ENCODE measurements at regions of chr5 and their contacts with region 1.

Region 1: DNA sequence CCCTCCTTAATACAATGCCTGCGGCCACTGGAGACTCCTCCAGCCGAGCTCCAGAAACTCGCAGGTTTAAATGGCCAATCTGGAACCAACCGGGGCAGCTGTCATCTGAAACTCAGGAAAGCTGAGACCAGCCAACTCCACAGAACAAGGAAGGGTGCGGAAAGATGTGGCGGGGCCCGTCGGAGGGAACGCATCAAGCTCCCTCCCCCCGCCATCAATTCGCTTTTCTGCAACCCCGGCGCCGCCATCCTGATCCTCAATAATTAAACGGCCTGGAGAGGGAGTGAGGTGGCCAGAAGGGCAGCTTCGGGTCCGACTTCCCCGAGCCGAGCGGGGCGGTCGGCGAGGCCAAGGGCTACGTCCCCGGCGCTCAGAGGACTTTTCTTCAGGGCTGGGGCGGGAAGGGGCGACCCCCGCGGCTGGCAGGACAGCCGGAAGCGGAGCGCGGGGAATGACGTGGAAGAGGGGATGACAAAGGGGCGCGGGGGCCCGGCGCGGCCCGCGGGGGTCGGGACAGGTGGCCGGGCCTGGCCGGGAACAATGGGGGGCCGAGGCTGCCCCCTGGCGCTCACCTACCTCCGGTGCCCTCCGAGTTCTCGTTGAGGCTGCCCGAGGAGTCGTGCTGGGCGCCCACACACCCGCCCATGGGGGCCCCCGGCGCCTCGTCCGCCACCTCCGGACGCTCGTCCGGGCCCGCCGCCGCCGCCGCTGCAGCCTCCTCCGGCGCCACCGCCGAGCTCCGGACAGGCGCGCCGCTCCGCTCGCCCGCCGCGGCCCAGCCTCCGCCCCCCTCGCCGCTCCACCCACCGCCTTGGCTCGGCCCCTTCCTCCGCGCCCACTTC is at the start of gene UBTD2:
- DNase-seq: peak in 1 of 2 donors; percentile 91
- H3K4me3 ChIP-seq: peak within 1 kb of the TSS; percentile 86 to 98
- H3K27ac ChIP-seq: peak within 1 kb of the TSS; percentile 88 to 97
- H3K4me1 ChIP-seq: peaks cover 6 to 23% of the 10 kb centered on the region in 2 donors
- H3K27me3 ChIP-seq: no peaks in the 10 kb centered on the region
- CTCF ChIP-seq: peak in 2 of 3 experiments; percentile 26 to 61
- total RNA-seq, gene UBTD2: 6.8 TPM

Region 2: DNA sequence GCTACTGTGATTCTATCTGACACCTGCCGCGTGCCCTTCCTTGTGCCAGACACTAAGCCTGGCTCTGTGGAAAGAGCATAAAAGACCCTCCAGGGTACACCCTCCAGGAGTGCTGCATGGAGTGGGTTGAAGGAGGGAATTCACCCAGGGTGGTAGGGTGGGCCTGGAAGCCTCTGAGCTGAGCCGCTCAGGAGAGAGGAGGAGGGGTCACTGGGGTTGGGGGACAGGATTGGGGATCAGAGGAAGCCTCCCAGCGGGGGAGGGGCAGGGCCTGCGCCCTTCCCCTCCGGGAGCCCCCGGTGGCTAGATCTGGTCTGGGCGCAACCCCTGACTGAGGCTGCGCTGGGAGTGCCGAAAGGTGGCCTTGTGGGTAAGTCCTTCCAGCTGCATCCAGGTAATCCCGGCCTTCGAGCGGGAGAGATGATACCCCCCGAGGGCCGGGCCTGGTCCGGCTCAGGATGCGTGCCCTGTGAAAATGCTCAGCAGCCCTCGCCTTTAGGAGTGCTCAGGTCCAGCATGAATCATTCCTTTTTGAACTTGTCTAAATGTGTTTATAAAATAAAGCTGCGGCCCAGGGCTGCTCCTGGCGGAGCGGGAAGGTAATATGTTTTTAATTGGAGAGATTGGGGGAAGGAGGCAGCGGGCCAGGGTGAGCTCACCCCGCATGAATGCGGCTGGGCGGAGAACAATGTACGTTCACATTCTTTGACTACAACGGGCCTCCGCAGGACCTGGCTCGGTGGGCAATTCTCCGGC is 615.7 kb before region 1 on chr5:
- intact Hi-C with region 1: loop called (anchors 10 kb)
- DNase-seq: peak in 1 of 2 donors; percentile 89
- H3K4me3 ChIP-seq: peak overlapping the region; percentile 1 to 38
- H3K27ac ChIP-seq: peak overlapping the region; percentile 74 to 78
- H3K4me1 ChIP-seq: peaks cover 0 to 9% of the 10 kb centered on the region in 2 donors
- H3K27me3 ChIP-seq: no peaks in the 10 kb centered on the region
- CTCF ChIP-seq: peak in 2 of 3 experiments; percentile 28 to 40

Region 3: GRCh38 chr5:172106511-172107356 is 176.5 kb before region 1 on chr5:
- intact Hi-C with region 1: loop called (anchors 2 kb)
- DNase-seq: peak in 1 of 2 donors; percentile 76
- H3K4me3 ChIP-seq: peak overlapping the region in 1 of 2 donors; percentile 25
- H3K27ac ChIP-seq: no peak overlapping the region
- H3K4me1 ChIP-seq: peaks cover 2 to 20% of the 10 kb centered on the region in 2 donors
- H3K27me3 ChIP-seq: no peaks in the 10 kb centered on the region
- CTCF ChIP-seq: peak; percentile 69 to 100 (median 100)

Region 4: DNA sequence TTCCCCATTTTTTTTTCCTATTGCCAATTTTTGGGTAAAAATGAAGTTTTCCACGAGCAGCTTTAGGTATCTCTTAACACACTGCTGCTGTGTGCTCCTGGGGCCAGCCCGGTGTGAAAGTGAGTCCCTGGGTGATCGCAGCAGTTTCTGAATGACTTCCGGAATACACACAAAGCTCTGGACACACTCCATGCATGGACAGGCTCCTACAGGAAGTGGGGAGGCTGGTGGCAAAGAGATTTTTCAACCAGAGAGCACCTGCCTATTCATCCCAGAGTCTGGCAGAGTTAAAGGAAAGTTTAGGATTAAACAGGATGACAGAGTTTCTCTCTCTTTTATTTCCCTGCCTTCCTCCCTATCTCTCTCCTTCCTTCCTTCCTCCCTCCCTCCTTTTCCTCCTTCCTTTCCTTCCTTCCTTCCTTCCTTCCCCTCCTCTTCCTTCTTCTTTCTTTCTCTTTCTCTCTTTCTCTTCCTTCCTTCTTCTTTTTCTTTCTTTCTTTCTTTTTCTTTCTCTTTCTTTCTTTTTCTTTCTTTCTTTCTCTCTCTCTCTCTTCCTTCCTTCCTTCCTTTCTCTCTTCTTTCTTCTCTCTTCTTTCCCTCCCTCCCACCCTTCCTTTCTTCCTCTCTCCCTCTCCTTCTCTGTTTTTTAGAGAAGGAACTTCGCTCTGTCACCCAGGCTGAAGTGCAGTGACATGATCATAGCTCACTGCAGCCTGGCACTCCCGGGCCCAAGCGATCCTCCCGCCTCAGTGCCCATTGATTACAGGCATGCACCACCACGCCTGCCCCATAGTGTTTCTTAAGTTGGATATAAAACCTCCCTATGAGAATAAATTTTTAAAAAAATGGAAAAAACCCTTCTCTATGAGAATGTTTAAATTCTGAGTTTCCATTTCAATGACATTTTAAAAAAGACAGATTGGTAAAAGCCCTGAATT is 39.1 kb after region 1 on chr5:
- intact Hi-C with region 1: loop called (anchors 5 kb)
- DNase-seq: peak in 1 of 2 donors; percentile 31
- H3K4me3 ChIP-seq: no peak overlapping the region
- H3K27ac ChIP-seq: no peak overlapping the region
- H3K4me1 ChIP-seq: peaks cover 6 to 13% of the 10 kb centered on the region in 2 donors
- H3K27me3 ChIP-seq: no peaks in the 10 kb centered on the region
- CTCF ChIP-seq: no peak

Region 5: DNA sequence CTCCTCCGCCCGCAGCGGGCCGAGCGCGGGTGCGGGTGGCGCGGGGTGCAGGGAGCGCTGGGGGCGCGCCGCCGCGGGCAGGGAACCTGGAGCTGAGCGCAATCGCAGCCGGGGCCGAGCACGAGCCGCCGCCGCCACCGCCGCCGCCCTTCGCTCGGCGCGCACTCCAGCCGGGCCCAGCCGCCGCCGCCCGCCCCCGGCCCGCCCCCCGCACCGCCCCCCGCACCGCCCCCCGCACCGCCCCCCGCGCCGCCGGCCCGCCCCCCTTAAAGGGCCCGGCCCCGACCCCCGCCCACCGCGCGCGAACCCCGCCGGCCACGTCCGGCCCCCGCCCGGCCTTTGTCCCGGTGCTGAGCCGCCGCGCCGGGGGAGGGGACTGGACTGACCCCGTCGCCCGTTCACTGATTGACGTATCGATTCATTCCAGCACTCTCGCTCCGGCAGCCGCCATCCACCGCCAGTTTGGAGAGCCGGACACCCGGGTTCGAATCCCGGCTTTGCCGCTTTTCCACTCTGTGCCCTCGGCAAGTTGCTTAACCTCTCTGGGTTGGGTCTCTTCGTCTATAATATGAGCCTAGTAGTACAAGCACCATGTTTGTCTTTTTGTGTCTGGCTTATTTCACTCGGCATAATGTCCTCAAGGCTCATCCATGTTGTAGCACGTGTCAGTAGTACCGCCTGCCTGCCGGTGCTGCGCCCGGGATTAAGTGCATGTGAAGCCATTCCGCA is 171.3 kb after region 1 on chr5 and contains the start of gene SH3PXD2B:
- intact Hi-C with region 1: loop called (anchors 5 kb)
- DNase-seq: peak in 1 of 2 donors; percentile 80
- H3K4me3 ChIP-seq: peak within 1 kb of the TSS; percentile 89 to 94
- H3K27ac ChIP-seq: peak within 1 kb of the TSS; percentile 83 to 87
- H3K4me1 ChIP-seq: peaks cover 9 to 19% of the 10 kb centered on the region in 2 donors
- H3K27me3 ChIP-seq: no peaks in the 10 kb centered on the region
- CTCF ChIP-seq: no peak
- total RNA-seq, gene SH3PXD2B: 60.8 TPM

Region 6: GRCh38 chr5:173057062-173057924 is 774.1 kb after region 1 on chr5:
- intact Hi-C with region 1: loop called (anchors 5 kb)
- DNase-seq: peak; percentile 98 to 100
- H3K4me3 ChIP-seq: peak overlapping the region; percentile 76 to 98
- H3K27ac ChIP-seq: peak overlapping the region; percentile 93 to 100
- H3K4me1 ChIP-seq: peaks cover 0 to 23% of the 10 kb centered on the region in 2 donors
- H3K27me3 ChIP-seq: no peaks in the 10 kb centered on the region
- CTCF ChIP-seq: peak; percentile 19 to 30 (median 21)

Region 7: GRCh38 chr5:173615884-173616576 is 1332.8 kb after region 1 on chr5:
- intact Hi-C with region 1: loop called (anchors 10 kb)
- DNase-seq: peak in 1 of 2 donors; percentile 77
- H3K4me3 ChIP-seq: peak overlapping the region; percentile 70 to 79
- H3K27ac ChIP-seq: peak overlapping the region; percentile 90 to 92
- H3K4me1 ChIP-seq: peaks cover 9 to 17% of the 10 kb centered on the region in 2 donors
- H3K27me3 ChIP-seq: no peaks in the 10 kb centered on the region
- CTCF ChIP-seq: peak; percentile 47 to 72 (median 67)